Activated CD4-positive, alpha-beta T cell treated with anti-CD3 and anti-CD28 coated beads, Interleukin-2, amount 10 ng/mL, durations not matched to agents 24 days and 14 days (primary cell): ENCODE measurements at regions of chr17 and their contacts with region 1.

Region 1: DNA sequence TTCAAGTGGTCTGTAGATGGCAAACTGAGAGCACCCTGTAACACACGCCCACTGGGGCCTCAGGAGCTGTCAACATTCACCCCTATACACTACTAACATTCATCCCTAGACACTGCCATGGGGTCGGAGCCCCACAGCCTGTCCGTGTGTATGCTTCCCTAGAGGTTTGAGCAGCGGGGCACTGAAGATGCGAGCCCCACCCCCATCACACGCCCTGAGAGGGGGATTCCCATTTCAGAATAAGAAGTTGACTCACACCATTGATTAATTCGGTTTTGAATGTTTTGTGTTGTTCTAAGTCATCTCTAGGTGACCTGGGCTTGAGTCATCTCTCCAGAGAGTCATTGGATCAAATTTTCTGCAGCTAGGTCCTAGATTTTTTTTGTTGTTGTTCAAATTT is 37.3 kb upstream of the MMD start:
- DNase-seq: peak; percentile 63
- H3K4me3 Mint-ChIP-seq: no peak overlapping the region
- H3K27ac Mint-ChIP-seq: peak overlapping the region; percentile 48
- H3K4me1 Mint-ChIP-seq: peaks cover 23% of the 10 kb centered on the region
- H3K27me3 Mint-ChIP-seq: peaks cover 9% of the 10 kb centered on the region

Region 2: GRCh38 chr17:55437159-55437605 is 21.8 kb before region 1 on chr17:
- intact Hi-C with region 1: loop called (anchors 2 kb)
- DNase-seq: no peak
- H3K4me3 Mint-ChIP-seq: no peak overlapping the region
- H3K27ac Mint-ChIP-seq: no peak overlapping the region
- H3K4me1 Mint-ChIP-seq: peaks cover 41% of the 10 kb centered on the region
- H3K27me3 Mint-ChIP-seq: peaks cover 6% of the 10 kb centered on the region